ENCODE measurements at regions of chr6 and their contacts with region 1.

Region 1: DNA sequence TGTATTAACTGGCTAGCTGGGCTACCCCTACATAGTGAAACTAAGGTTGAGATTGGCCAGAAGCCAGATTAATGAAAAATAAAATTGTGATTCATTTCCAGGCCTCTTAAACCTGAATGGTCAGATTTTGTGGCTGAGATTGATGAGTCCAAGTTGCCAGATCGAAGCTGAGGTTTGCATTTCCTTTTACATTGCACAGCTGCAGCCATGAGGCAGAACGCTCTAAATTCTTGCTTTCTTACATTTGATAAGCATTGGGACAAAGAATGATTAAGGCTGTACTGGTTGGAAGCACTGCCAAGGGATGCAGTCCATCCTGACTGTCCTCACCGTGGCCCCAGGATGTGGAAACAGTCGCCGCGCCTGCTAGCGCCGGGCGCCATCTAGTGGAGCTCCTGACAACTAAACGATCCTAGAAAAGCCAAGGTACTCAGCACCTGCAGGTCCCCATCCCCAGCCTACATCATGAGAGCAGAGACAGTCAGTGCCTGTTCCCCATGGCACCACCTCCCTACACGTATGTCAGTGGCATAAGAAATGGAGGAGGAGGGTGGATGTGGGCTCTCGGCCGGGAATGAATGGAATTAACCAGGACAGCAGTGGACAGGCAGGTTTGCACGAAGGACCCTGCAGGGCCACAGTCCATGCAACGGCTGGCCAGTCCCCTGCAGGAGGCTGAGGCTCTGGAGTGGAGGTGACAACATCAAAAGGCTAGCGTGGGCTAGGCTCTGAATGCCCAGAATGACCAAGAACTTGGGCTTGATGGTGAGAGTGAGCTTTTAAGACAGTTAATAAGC is 19.0 kb downstream of the PXDC1 start:
- DNase-seq: peak; percentile 47 to 66
- ATAC-seq: peak; percentile 75 to 90
- H3K4me3 ChIP-seq: no peak overlapping the region
- H3K27ac ChIP-seq: no peak overlapping the region
- H3K4me1 ChIP-seq: no peaks in the 10 kb centered on the region
- H3K27me3 ChIP-seq: no peaks in the 10 kb centered on the region
- CTCF ChIP-seq: peak; percentile 67 to 92 (median 83)
- POLR2A ChIP-seq: no peak

Region 2: GRCh38 chr6:3124667-3125066 is 607.9 kb before region 1 on chr6:
- in situ Hi-C with region 1: loop called (anchors 10 to 25 kb)
- intact Hi-C with region 1: no loop called
- DNase-seq: no peak
- ATAC-seq: no peak
- H3K4me3 ChIP-seq: no peak overlapping the region
- H3K27ac ChIP-seq: no peak overlapping the region
- H3K4me1 ChIP-seq: no peaks in the 10 kb centered on the region
- H3K27me3 ChIP-seq: no peaks in the 10 kb centered on the region
- CTCF ChIP-seq: no peak
- POLR2A ChIP-seq: no peak

Region 3: DNA sequence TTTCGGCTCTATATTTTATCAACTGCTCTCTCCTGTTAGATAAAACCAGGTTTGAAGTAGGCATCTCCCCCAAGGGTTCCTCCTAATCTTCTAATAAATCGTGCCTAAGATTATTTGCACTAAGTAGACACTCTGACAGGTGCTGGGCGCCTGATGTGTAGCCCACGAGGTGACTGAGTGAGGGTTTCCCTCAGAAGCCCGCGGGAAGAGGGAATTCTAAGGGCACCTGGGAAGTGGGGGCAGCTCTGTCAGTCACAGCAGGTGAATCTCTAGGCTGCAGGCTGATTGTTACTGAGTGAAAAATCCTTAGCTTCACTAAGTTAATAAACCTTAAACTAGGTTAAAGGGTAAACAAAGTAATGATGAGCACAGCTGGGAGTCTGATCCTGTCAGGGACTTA is 49.2 kb before region 1 on chr6:
- in situ Hi-C with region 1: no loop called
- intact Hi-C with region 1: no loop called
- DNase-seq: no peak
- ATAC-seq: no peak
- H3K4me3 ChIP-seq: no peak overlapping the region
- H3K27ac ChIP-seq: no peak overlapping the region
- H3K4me1 ChIP-seq: no peaks in the 10 kb centered on the region
- H3K27me3 ChIP-seq: no peaks in the 10 kb centered on the region
- CTCF ChIP-seq: no peak
- POLR2A ChIP-seq: no peak

Region 4: DNA sequence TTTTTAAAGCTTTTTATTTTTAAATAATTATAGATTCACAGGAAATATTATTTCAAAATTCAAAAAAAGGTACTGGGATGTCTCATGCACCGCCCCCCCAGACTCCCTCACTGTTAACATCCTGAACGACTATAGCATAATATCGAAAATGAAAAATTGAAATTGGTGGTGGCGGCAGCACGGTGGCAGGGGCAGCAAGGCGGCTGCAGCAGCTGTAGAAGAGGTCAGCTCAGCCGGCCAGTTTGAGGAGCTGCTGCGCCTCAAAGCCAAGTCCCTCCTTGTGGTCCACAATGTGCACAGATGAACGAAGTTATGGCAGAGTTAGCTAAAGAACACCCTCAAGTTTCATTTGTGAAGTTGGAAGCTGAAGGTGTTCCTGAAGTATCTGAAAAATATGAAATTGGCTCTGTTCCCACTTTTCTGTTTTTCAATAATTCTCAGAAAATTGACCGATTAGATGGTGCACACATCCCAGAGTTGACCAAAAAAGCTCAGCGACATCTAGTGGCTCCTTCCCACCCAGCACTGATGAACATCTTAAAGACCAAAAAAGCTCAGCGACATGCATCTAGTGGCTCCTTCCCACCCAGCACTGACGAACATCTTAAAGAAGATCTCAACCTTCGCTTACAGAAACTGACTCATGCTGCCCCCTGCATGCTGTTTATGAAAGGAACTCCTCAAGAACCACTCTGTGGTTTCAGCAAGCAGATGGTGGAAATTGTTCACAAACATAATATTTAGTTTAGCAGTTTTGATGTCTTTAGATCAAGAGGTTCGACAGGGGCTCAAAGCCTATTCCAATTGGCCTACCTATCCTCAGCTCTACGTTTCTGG is 245.6 kb after region 1 on chr6:
- in situ Hi-C with region 1: no loop called
- intact Hi-C with region 1: no loop called
- DNase-seq: peak in 1 of 2 donors; percentile 19
- ATAC-seq: peak; percentile 58 to 82
- H3K4me3 ChIP-seq: no peak overlapping the region
- H3K27ac ChIP-seq: no peak overlapping the region
- H3K4me1 ChIP-seq: no peaks in the 10 kb centered on the region
- H3K27me3 ChIP-seq: no peaks in the 10 kb centered on the region
- CTCF ChIP-seq: peak in 4 of 5 experiments; percentile 14 to 55 (median 40)
- POLR2A ChIP-seq: no peak